Motor neuron (in vitro differentiated cells): ENCODE measurements at regions of chr3 and their contacts with region 1.

Region 1: DNA sequence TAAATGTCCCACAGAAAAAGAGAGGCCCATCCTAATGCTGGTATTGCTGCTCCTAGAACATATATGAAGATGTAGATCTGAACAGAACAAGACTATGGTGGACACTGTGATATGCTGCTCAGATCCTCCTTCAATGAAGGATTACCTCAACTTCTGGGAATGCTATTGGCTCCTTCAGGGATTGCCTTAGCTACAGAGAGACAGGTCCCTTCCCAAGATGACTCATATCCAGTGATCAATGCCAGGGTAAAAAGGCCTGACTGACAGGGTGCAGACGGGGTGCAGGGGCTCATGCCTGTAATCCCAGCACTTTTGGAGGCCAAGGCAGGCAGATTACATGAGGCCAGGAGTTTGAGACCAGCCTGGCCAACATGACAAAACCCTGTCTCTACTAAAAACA is 20.5 kb upstream of the STAG1 start:
- ATAC-seq: peak in 7 of 8 experiments; percentile 22 to 91 (median 39)
- H3K4me3 ChIP-seq: no peak overlapping the region
- H3K27ac ChIP-seq: no peak overlapping the region
- H3K4me1 ChIP-seq: no peaks in the 10 kb centered on the region

Region 2: DNA sequence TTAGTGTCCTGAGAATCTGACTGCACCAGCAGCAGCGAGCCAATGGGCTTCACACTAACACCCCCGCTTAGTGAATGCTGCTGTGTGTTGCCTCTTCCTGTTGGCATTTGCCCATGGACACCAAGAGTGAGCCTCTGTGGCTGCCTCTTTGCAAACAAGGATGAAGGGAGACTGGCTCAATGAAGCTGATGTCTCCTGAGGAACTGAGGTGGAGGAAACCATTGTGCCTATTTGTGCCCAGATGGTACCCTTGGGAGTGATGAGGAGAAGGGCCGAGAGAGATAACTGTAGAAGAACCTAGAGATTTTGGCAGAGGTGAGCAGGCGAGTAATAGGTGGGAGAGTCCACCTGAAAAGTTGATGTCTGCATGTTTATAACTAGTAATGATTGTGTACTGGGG is 236.3 kb after region 1 on chr3:
- in situ Hi-C with region 1: loop called in 3 of 9 experiments (anchors 10 to 25 kb)
- ATAC-seq: no peak
- H3K4me3 ChIP-seq: no peak overlapping the region
- H3K27ac ChIP-seq: no peak overlapping the region
- H3K4me1 ChIP-seq: no peaks in the 10 kb centered on the region